Mammary epithelial cell (primary cell): ENCODE measurements at regions of chr5 and their contacts with region 1.

Region 1: GRCh38 chr5:120055858-120056257 is 408.2 kb upstream of the PRR16 start:
- DNase-seq: peak; percentile 39
- H3K4me3 ChIP-seq: no peak overlapping the region
- H3K27ac ChIP-seq: no peak overlapping the region
- H3K4me1 ChIP-seq: no peaks in the 10 kb centered on the region
- H3K27me3 ChIP-seq: no peaks in the 10 kb centered on the region
- CTCF ChIP-seq: peak; percentile 19 to 59

Region 2: GRCh38 chr5:119470851-119471451 is 584.9 kb before region 1 on chr5:
- CTCF ChIA-PET with region 1: no interaction called
- dilution Hi-C with region 1: no loop called
- in situ Hi-C with region 1: no loop called
- intact Hi-C with region 1: loop called (anchors 10 kb)
- DNase-seq: peak; percentile 19
- H3K4me3 ChIP-seq: no peak overlapping the region
- H3K27ac ChIP-seq: no peak overlapping the region
- H3K4me1 ChIP-seq: no peaks in the 10 kb centered on the region
- H3K27me3 ChIP-seq: no peaks in the 10 kb centered on the region
- CTCF ChIP-seq: peak; percentile 61 to 67

Region 3: GRCh38 chr5:120160120-120160895 is 104.5 kb after region 1 on chr5:
- CTCF ChIA-PET with region 1: no interaction called
- dilution Hi-C with region 1: no loop called
- in situ Hi-C with region 1: no loop called
- intact Hi-C with region 1: no loop called
- DNase-seq: peak; percentile 85
- H3K4me3 ChIP-seq: no peak overlapping the region
- H3K27ac ChIP-seq: no peak overlapping the region
- H3K4me1 ChIP-seq: no peaks in the 10 kb centered on the region
- H3K27me3 ChIP-seq: no peaks in the 10 kb centered on the region
- CTCF ChIP-seq: no peak

Region 4: GRCh38 chr5:120327180-120327579 is 271.3 kb after region 1 on chr5:
- CTCF ChIA-PET with region 1: no interaction called
- dilution Hi-C with region 1: no loop called
- in situ Hi-C with region 1: no loop called
- intact Hi-C with region 1: loop called (anchors 10 kb)
- DNase-seq: no peak
- H3K4me3 ChIP-seq: no peak overlapping the region
- H3K27ac ChIP-seq: no peak overlapping the region
- H3K4me1 ChIP-seq: no peaks in the 10 kb centered on the region
- H3K27me3 ChIP-seq: no peaks in the 10 kb centered on the region
- CTCF ChIP-seq: peak; percentile 11 to 29

Region 5: GRCh38 chr5:120457839-120458507 is 402.1 kb after region 1 on chr5:
- CTCF ChIA-PET with region 1: no interaction called
- dilution Hi-C with region 1: no loop called
- in situ Hi-C with region 1: loop called in 1 of 2 experiments (anchors 25 kb)
- intact Hi-C with region 1: loop called (anchors 1 kb)
- DNase-seq: peak; percentile 68
- H3K4me3 ChIP-seq: no peak overlapping the region
- H3K27ac ChIP-seq: no peak overlapping the region
- H3K4me1 ChIP-seq: peaks cover 4% of the 10 kb centered on the region
- H3K27me3 ChIP-seq: no peaks in the 10 kb centered on the region
- CTCF ChIP-seq: peak; percentile 39 to 69

Region 6: GRCh38 chr5:120803282-120803681 is 747.4 kb after region 1 on chr5:
- CTCF ChIA-PET with region 1: no interaction called
- dilution Hi-C with region 1: no loop called
- in situ Hi-C with region 1: no loop called
- intact Hi-C with region 1: loop called (anchors 5 kb)
- DNase-seq: peak; percentile 2
- H3K4me3 ChIP-seq: no peak overlapping the region
- H3K27ac ChIP-seq: no peak overlapping the region
- H3K4me1 ChIP-seq: no peaks in the 10 kb centered on the region
- H3K27me3 ChIP-seq: peaks cover 2% of the 10 kb centered on the region
- CTCF ChIP-seq: peak in 1 of 2 donors; percentile 29